Transverse colon (tissue), 4 donors: ENCODE measurements at regions of chr9 and their contacts with region 1.

Region 1: DNA sequence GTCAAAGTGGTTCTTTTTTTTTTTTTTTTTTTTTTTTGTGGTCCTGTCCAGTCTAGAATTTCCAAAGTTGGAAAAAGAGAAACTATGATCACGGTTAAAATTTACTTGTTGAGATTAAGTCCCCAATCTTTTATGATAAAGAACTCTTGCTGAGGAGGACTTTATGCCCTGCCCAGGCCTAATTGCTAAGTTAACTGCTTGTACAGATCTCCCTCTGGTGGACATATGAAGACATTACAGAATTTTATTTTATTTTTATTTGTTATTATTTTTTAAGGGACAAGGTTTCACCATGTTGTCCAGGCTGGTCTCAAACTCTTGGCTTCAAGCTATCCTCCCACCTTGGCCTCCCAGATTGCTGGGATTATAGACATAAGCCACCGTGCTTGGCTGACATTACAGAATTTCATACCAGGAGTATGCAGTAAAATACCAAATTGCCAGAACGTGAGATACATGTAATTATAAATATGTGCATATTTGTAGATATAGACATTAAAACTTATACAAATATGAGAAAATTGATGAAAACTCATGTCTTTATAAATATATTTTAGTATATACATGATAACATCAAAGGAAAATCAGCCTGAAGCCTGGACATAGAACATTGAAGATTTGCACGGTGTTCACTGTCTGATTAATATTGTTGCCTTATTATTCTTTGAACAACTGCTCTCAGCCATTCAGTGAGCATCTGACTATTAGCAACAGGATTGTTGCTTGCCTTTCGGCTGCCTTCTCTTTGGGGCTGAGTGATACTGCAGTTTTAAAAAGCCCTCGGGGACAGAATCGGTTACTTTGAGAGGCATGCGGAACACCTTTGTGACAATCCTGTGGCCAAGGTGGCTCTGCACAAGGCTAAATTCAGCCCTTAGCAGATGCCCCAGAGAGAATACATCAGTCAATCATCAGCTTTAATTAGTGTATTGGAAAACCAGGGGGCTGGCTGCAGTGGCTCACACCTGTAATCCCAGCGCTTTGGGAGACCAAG is 91.0 kb downstream of the RFK start:
- DNase-seq: no peak
- H3K4me3 ChIP-seq: no peak overlapping the region
- H3K27ac ChIP-seq: no peak overlapping the region
- H3K4me1 ChIP-seq: peaks cover 0 to 21% (median 5%) of the 10 kb centered on the region in 4 donors
- H3K27me3 ChIP-seq: peaks cover 4% of the 10 kb centered on the region
- CTCF ChIP-seq: peak; percentile 71 to 83 (median 78)
- EP300 ChIP-seq: no peak
- POLR2A ChIP-seq: no peak

Region 2: GRCh38 chr9:75866273-75866871 is 436.9 kb before region 1 on chr9:
- in situ Hi-C with region 1: loop called in 1 of 4 experiments (anchors 10 kb)
- intact Hi-C with region 1: no loop called
- DNase-seq: peak; percentile 52
- H3K4me3 ChIP-seq: no peak overlapping the region
- H3K27ac ChIP-seq: no peak overlapping the region
- H3K4me1 ChIP-seq: peaks cover 0 to 5% (median 4%) of the 10 kb centered on the region in 4 donors
- H3K27me3 ChIP-seq: no peaks in the 10 kb centered on the region
- CTCF ChIP-seq: peak; percentile 69 to 81 (median 79)
- EP300 ChIP-seq: no peak
- POLR2A ChIP-seq: no peak

Region 3: DNA sequence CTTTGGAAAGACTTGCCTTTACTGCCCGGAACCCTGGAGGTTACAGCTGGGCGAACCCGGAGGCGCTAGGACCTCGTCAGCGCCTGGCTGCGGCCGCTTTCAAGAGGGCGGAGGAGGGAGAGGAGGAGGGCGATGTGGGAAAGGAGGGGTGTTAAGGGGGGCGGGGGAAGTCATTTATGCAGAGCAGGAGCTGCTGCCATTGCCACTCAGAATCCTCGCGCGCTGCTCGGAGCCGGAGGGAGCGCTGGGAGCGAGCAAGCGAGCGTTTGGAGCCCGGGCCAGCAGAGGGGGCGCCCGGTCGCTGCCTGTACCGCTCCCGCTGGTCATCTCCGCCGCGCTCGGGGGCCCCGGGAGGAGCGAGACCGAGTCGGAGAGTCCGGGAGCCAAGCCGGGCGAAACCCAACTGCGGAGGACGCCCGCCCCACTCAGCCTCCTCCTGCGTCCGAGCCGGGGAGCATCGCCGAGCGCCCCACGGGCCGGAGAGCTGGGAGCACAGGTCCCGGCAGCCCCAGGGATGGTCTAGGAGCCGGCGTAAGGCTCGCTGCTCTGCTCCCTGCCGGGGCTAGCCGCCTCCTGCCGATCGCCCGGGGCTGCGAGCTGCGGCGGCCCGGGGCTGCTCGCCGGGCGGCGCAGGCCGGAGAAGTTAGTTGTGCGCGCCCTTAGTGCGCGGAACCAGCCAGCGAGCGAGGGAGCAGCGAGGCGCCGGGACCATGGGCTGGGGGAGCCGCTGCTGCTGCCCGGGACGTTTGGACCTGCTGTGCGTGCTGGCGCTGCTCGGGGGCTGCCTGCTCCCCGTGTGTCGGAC is 412.6 kb before region 1 on chr9 and contains the start of gene PCSK5:
- in situ Hi-C with region 1: loop called in 3 of 4 experiments (anchors 25 kb)
- intact Hi-C with region 1: no loop called
- DNase-seq: peak; percentile 94
- H3K4me3 ChIP-seq: peak within 1 kb of the TSS; percentile 83 to 93 (median 90)
- H3K27ac ChIP-seq: peak within 1 kb of the TSS; percentile 92 to 97 (median 95)
- H3K4me1 ChIP-seq: peaks cover 3 to 41% (median 19%) of the 10 kb centered on the region in 4 donors
- H3K27me3 ChIP-seq: no peaks in the 10 kb centered on the region
- CTCF ChIP-seq: peak in 3 of 5 experiments; percentile 20 to 41 (median 35)
- EP300 ChIP-seq: no peak
- POLR2A ChIP-seq: peak; percentile 96
- total RNA-seq, gene PCSK5: 110 to 248 (median 127) TPM

Region 4: GRCh38 chr9:76245518-76245917 is 57.7 kb before region 1 on chr9:
- in situ Hi-C with region 1: no loop called
- intact Hi-C with region 1: no loop called
- DNase-seq: no peak
- H3K4me3 ChIP-seq: no peak overlapping the region
- H3K27ac ChIP-seq: no peak overlapping the region
- H3K4me1 ChIP-seq: no peaks in the 10 kb centered on the region
- H3K27me3 ChIP-seq: no peaks in the 10 kb centered on the region
- CTCF ChIP-seq: no peak
- EP300 ChIP-seq: no peak
- POLR2A ChIP-seq: no peak